ENCODE measurements at regions of chr6 and their contacts with region 1.

Region 1: GRCh38 chr6:33271458-33272274 is at the starts of genes RPS18 and VPS52:
- DNase-seq: peak; percentile 83 to 96
- ATAC-seq: peak; percentile 94 to 98 (median 98)
- H3K4me3 ChIP-seq: peak within 1 kb of the TSS; percentile 70 to 88 (median 80)
- H3K27ac ChIP-seq: peak within 1 kb of the TSS; percentile 87 to 98 (median 93)
- H3K4me1 ChIP-seq: peaks cover 10 to 62% (median 53%) of the 10 kb centered on the region in 9 donors
- H3K27me3 ChIP-seq: no peaks in the 10 kb centered on the region
- CTCF ChIP-seq: no peak
- total RNA-seq, gene RPS18: 767 to 1,326 (median 860) TPM
- total RNA-seq, gene VPS52: 29.8 to 41.6 (median 35.9) TPM

Region 2: GRCh38 chr6:33235221-33235634 is 36.4 kb before region 1 on chr6:
- intact Hi-C with region 1: no loop called
- DNase-seq: no peak
- ATAC-seq: no peak
- H3K4me3 ChIP-seq: no peak overlapping the region
- H3K27ac ChIP-seq: no peak overlapping the region
- H3K4me1 ChIP-seq: no peaks in the 10 kb centered on the region
- H3K27me3 ChIP-seq: peaks cover 0 to 47% (median 22%) of the 10 kb centered on the region in 7 donors
- CTCF ChIP-seq: no peak

Region 3: DNA sequence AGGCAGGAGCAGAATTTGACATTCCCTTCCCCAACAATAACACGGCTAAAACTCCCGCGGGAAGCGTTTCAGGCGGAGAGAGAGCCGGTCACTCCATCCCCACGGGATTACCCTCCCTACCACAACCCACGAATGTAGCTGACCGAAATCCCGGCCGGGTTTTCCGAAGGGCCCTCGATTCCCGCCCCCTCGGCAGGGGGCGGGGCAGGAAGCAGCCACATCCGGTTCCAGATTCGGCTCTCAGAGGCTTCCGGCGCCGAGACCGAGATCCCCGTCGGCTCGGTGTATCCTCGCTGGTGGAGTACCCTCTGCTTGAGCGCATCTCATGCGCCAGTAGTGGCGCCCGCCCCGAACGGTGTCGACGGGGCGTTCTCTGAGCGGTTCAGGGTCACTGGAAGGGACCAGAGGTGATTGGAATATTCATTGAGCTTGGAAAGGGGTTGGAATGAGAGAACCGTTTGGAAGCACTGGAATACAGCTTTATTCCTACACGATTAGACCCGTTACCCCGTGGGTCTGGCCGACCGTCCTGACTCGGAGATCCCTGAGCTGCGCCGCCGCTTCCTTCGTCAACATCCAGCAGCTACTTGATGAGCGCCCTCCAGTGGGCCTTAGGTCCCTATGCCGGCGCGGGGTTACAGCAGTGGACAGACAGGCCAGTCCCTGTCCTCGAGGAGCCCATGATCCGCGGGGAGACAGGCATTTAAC is 27.7 kb after region 1 on chr6:
- intact Hi-C with region 1: loop called in 1 of 10 experiments (anchors 1 kb)
- DNase-seq: peak; percentile 93 to 95
- ATAC-seq: peak; percentile 76 to 90 (median 84)
- H3K4me3 ChIP-seq: peak overlapping the region; percentile 65 to 97 (median 80)
- H3K27ac ChIP-seq: peak overlapping the region; percentile 85 to 99 (median 98)
- H3K4me1 ChIP-seq: peaks cover 11 to 41% (median 37%) of the 10 kb centered on the region in 9 donors
- H3K27me3 ChIP-seq: no peaks in the 10 kb centered on the region
- CTCF ChIP-seq: peak; percentile 55 to 90 (median 80)

Region 4: GRCh38 chr6:33490209-33490608 is 218.5 kb after region 1 on chr6:
- intact Hi-C with region 1: no loop called
- DNase-seq: no peak
- ATAC-seq: no peak
- H3K4me3 ChIP-seq: no peak overlapping the region
- H3K27ac ChIP-seq: no peak overlapping the region
- H3K4me1 ChIP-seq: no peaks in the 10 kb centered on the region
- H3K27me3 ChIP-seq: peaks cover 0 to 20% (median 0%) of the 10 kb centered on the region in 7 donors
- CTCF ChIP-seq: no peak